Activated CD4-positive, alpha-beta memory T cell treated with anti-CD3 and anti-CD28 coated beads, Interleukin-2, amount 10 ng/mL, durations not matched to agents 7 days and 5 days (primary cell): ENCODE measurements at regions of chr3 and their contacts with region 1.

Region 1: DNA sequence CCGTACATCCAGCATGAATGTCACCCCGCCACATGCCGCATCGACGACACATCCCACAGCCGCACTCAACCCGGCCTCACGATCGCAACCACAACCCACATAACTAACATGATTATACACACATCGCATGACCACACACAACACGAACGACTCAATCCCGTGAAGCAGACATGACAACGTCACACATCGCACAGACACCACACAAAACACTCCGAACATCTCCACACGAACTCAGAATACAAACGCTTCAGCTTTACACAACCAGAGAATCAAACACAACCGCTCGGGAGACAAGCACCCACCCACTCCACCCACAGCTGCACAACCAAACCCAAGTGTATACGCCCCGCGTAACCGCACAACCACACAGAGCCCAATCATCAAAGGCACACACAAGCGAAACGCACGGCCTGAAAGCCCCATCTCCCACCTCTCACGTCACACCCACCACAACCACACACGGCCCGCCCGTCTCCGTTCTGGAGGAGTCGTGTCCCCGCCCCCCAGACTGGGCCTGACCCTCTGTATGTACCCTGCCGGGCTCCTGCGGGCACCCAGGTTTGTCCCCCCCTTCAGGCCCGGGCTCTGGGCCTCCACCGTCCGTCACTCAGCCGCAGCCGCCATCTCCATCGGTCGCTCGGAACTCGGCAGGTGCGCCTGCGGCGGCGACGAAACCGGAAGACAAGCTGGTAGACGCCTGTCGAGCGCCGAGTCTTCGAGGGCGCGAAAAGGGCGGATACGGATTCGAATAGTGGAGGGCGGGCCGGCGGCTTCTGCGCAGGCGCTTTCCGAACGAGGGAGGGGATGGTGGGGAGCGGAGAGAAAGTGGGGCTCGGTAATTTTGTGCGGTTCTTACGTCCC is at the start of gene RBSN:
- DNase-seq: peak; percentile 97
- H3K4me3 Mint-ChIP-seq: peak within 1 kb of the TSS; percentile 95
- H3K27ac Mint-ChIP-seq: peak within 1 kb of the TSS; percentile 99
- H3K4me1 Mint-ChIP-seq: peaks cover 55% of the 10 kb centered on the region
- H3K27me3 Mint-ChIP-seq: no peaks in the 10 kb centered on the region
- total RNA-seq, gene RBSN: 19.4 to 19.7 TPM

Region 2: DNA sequence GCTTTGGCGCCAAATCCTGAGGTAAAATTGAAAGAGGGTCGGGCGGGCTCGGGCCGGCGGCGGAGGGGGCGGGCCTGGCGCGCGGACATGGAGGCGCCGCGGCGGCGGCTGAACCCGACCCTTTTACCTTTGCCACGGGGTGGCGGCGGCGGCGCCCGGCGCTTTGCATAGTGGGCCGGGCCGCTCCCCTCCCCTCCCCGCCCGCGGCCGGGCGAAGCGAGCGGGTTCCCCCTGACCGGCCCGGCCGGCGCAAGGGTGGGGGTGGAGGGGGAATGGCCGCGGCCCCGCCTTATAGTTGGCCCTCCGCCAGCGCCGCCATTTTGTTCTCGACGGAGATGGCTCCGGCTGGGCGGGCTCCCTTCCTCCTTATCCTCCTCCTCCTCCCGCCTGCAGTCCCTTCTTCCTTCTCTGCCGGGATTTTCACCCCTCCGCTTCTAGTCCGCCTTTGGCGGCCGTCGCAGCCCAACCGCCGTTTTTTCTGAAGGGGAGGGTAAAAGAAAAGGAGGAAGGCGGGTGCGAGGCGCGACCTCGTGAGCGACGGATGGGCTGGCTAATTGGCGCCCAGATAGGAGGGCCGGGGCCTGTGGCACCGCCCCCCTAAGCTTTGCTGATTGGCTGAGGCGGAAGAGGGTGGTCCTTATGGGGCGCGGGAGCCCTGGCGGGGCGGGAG is 150.7 kb before region 1 on chr3:
- CTCF ChIA-PET with region 1: no interaction called
- POLR2A ChIA-PET with region 1: interaction called, 24 read pairs
- DNase-seq: peak; percentile 96
- H3K4me3 Mint-ChIP-seq: peak overlapping the region; percentile 100
- H3K27ac Mint-ChIP-seq: peak overlapping the region; percentile 100
- H3K4me1 Mint-ChIP-seq: peaks cover 40% of the 10 kb centered on the region
- H3K27me3 Mint-ChIP-seq: no peaks in the 10 kb centered on the region

Region 3: DNA sequence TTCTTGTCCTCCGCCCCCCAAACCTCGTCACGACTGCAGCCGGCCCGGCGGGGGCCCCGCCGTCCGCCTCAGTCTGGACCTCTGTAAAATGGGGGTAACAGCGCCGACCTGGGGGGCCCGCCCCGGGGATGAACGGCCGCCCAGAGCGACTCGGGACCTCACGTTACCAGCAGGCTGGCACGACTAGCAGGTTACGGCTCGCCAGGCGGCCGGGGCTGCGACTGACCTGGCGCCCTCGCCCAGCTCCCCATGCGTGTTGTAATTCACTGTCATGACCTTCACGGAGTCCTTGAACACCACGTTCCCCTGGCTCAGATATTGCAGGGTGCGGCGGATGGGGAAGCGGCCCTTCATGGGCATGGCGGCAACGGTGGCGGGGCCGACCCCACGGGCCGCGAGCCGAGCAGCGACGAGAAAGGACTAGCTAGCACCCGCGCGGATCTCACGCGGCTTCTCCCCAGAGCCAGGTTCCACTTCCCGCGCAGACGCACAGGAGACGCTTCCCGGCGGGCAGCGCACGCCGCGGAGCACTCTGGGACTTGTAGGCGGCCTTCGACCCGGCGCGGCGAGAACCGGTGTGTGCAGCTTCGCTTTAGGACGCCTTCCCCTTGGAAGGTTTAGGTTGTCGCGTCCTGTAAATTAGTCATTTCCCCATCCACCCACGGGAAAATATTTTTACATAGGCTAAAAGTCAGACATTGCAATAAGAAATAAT is 33.7 kb before region 1 on chr3 and contains the start of gene MRPS25:
- CTCF ChIA-PET with region 1: interaction called, 9 read pairs
- POLR2A ChIA-PET with region 1: interaction called, 53 read pairs
- DNase-seq: peak; percentile 92
- H3K4me3 Mint-ChIP-seq: peak within 1 kb of the TSS; percentile 96
- H3K27ac Mint-ChIP-seq: peak within 1 kb of the TSS; percentile 89
- H3K4me1 Mint-ChIP-seq: peaks cover 29% of the 10 kb centered on the region
- H3K27me3 Mint-ChIP-seq: no peaks in the 10 kb centered on the region
- total RNA-seq, gene MRPS25: 34.6 to 35.0 TPM

Region 4: GRCh38 chr3:15120986-15121385 is 22.3 kb after region 1 on chr3:
- CTCF ChIA-PET with region 1: interaction called, 15 read pairs
- POLR2A ChIA-PET with region 1: interaction called, 6 read pairs
- DNase-seq: no peak
- H3K4me3 Mint-ChIP-seq: no peak overlapping the region
- H3K27ac Mint-ChIP-seq: no peak overlapping the region
- H3K4me1 Mint-ChIP-seq: peaks cover 17% of the 10 kb centered on the region
- H3K27me3 Mint-ChIP-seq: peaks cover 3% of the 10 kb centered on the region

Region 5: DNA sequence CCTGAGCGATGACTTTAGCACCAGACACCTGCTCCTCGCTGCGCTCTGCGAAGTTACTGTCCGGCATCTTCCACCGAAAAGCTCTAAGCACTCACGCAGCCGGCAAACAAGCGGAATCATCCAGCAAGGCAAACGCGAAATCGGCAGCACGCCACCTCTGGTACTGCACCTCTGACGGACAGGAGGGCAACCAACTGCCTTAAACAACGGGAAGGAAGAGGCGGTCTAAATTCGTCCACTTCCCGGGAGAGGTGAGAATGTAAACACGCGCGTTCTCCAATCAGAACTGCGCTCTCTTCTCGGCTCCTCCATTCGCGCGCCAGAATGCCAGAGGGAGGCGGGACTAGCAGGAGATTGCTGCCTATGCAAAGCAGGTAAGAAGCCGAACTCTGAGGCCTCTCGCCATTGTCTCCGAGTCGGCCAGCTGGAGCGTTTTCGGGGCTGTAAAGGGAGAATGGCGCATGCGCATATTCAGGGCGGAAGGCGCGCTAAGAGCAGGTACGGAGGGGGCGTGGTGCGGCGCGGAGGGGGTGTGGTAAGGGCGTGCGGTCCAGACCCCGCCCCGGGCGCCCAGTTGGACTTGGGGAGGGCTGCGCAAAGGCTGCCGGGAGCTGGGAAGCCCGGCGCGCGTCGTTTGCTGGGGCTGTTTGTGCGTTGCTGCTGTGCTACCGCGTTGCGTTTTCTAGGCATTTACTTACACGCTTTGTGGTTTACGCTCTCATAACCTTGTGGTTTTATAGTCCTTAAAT is 502.8 kb after region 1 on chr3 and contains the starts of genes BTD and HACL1:
- CTCF ChIA-PET with region 1: no interaction called
- POLR2A ChIA-PET with region 1: interaction called, 12 read pairs
- DNase-seq: peak; percentile 98
- H3K4me3 Mint-ChIP-seq: peak within 1 kb of the TSS; percentile 100
- H3K27ac Mint-ChIP-seq: peak within 1 kb of the TSS; percentile 99
- H3K4me1 Mint-ChIP-seq: peaks cover 41% of the 10 kb centered on the region
- H3K27me3 Mint-ChIP-seq: no peaks in the 10 kb centered on the region
- total RNA-seq, gene BTD: 11.7 to 12.7 TPM
- total RNA-seq, gene HACL1: 25.8 to 29.1 TPM